ENCODE measurements at regions of chr2 and their contacts with region 1.

Region 1: GRCh38 chr2:63050334-63051041 is at the start of gene OTX1:
- DNase-seq: no peak
- ATAC-seq: peak in 6 of 8 donors; percentile 24 to 70 (median 50)
- H3K4me3 ChIP-seq: peak within 1 kb of the TSS; percentile 32 to 60 (median 52)
- H3K27ac ChIP-seq: no peak within 1 kb of the TSS
- H3K4me1 ChIP-seq: peaks cover 11 to 68% (median 62%) of the 10 kb centered on the region in 9 donors
- H3K27me3 ChIP-seq: peaks cover 53 to 100% (median 100%) of the 10 kb centered on the region in 7 donors
- CTCF ChIP-seq: no peak
- total RNA-seq, gene OTX1: not detected

Region 2: DNA sequence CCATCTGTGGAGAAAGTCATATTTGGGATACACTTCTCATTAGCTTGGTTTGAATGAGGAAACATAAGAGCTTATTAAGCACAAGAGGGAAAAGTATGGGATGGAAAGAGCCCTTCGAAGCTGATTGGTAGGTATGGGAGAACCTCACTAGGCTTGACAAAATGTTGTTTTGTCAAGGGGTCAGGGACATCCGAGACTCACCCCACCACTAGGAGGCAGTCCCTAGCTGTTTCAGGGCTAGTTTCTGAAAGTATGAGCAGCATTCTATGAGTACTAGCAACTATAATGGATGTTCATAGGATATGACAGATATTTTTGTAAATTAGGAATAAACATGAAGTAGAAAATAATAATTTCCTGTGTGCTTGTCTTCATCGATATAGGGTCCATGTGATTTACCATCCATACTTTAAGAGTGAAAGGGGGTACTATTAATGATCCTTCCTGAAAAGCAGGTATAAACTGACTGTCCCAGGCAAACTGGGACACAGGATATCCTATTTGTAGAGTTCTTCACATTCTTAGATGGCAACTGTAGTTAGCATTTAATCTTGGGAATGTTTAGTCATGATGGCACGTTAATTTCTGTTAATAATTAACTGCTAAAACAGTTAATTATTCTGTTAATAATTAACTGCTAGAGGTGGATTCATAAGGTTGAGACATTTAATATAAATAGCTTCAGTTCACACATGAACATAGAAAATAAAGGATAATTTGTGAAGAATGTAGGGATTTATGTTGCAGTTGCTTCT is 28.5 kb after region 1 on chr2:
- intact Hi-C with region 1: loop called in 1 of 10 experiments (anchors 1 kb)
- DNase-seq: no peak
- ATAC-seq: no peak
- H3K4me3 ChIP-seq: no peak overlapping the region
- H3K27ac ChIP-seq: no peak overlapping the region
- H3K4me1 ChIP-seq: no peaks in the 10 kb centered on the region
- H3K27me3 ChIP-seq: peaks cover 0 to 61% (median 30%) of the 10 kb centered on the region in 7 donors
- CTCF ChIP-seq: peak in 3 of 9 donors; percentile 19 to 28 (median 19)

Measured in heart right ventricle (tissue), 16 donors.